PC-3 (cell line): ENCODE measurements at regions of chr22 and their contacts with region 1.

Region 1: GRCh38 chr22:29040385-29041275 is 21.0 kb downstream of the C22orf31 start:
- DNase-seq: peak; percentile 64
- ATAC-seq: peak; percentile 60
- H3K4me3 ChIP-seq: no peak overlapping the region
- H3K27ac ChIP-seq: no peak overlapping the region
- H3K4me1 ChIP-seq: peaks cover 16% of the 10 kb centered on the region
- H3K27me3 ChIP-seq: no peaks in the 10 kb centered on the region
- CTCF ChIP-seq: peak; percentile 88

Region 2: GRCh38 chr22:28791841-28792490 is 248.7 kb before region 1 on chr22:
- CTCF ChIA-PET with region 1: no interaction called
- POLR2A ChIA-PET with region 1: no interaction called
- intact Hi-C with region 1: loop called (anchors 5 kb)
- DNase-seq: no peak
- ATAC-seq: peak; percentile 15; the same call in 1 of the 2 replicates
- H3K4me3 ChIP-seq: no peak overlapping the region
- H3K27ac ChIP-seq: no peak overlapping the region
- H3K4me1 ChIP-seq: no peaks in the 10 kb centered on the region
- H3K27me3 ChIP-seq: no peaks in the 10 kb centered on the region
- CTCF ChIP-seq: no peak

Region 3: DNA sequence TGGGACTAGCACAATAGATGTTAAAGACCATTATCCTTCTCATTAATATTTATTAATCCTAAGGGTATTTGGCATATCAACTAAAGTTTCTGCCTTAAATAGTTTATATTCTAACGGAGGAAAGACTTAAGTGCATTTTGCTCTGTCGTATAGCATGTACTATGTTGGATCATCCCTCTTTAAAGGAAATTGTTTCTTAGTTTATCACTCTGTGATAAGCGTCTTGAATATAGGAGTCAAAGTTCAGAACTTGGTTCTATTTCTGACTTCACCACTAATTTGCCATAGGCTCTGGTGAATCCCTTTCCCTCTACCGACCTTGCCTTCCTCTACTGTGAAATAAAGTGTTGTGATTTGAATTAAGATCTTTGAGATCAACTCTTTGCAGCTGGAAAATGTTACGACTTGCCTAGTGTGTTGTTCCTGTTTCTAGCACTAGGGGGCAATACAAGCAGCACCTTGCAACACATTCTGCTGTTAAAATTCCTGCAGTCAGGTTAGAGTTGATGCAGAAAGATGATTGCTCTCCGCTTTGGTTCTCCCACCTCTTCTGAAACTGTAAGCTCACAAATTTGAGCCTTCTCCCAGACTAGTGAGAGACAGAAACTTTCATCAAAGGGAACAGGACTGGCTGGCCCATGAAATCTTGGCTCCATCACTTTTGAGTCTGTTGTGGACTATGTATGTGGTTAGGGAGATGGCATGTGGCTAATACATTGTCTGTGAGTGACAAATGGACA is 185.1 kb before region 1 on chr22:
- CTCF ChIA-PET with region 1: interaction called, 6 read pairs
- POLR2A ChIA-PET with region 1: no interaction called
- intact Hi-C with region 1: loop called (anchors 1 kb)
- DNase-seq: peak; percentile 72
- ATAC-seq: peak; percentile 57
- H3K4me3 ChIP-seq: no peak overlapping the region
- H3K27ac ChIP-seq: no peak overlapping the region
- H3K4me1 ChIP-seq: no peaks in the 10 kb centered on the region
- H3K27me3 ChIP-seq: no peaks in the 10 kb centered on the region
- CTCF ChIP-seq: peak; percentile 84

Region 4: GRCh38 chr22:28882878-28883656 is 157.6 kb before region 1 on chr22 and contains the start of gene ZNRF3:
- CTCF ChIA-PET with region 1: interaction called, 7 read pairs
- POLR2A ChIA-PET with region 1: interaction called, 27 read pairs
- intact Hi-C with region 1: loop called (anchors 2 kb)
- DNase-seq: peak; percentile 83
- ATAC-seq: peak; percentile 67
- H3K4me3 ChIP-seq: peak within 1 kb of the TSS; percentile 93
- H3K27ac ChIP-seq: peak within 1 kb of the TSS; percentile 31
- H3K4me1 ChIP-seq: peaks cover 28% of the 10 kb centered on the region
- H3K27me3 ChIP-seq: no peaks in the 10 kb centered on the region
- CTCF ChIP-seq: no peak
- total RNA-seq, gene ZNRF3: 8.1 and 9.4 TPM in 2 replicates

Region 5: DNA sequence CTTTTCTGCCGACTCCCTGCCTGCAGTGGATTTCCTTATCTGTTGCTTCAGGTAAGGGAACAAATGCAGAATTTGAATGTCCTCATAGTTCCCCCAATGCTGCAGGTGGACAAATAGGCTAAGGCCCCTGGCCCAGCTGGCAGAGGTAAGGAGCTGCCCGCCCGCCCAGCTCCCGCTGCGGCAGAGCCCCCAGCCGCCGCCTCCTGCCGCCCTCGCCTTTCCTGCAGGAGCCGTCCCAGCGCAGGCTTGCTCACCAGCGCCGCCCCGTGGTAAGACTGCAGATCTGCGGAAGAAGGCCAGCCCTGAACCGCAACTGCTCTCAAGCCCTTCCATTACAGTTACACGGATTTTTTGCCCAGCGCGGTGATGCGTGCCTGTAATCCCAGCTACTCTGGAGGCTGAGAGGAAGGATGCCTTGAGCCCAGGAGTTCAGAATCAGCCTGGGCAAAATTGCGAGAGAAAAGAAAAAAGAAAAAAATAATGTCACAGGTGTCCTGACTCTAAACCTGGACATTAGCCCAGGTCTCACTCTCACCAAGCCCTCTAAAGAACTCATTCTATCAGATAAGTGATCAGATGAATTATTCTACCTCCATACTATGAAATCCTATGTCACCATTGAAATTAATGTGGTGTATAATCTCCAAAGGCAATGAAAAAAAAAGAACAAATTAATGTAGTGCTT is 113.9 kb after region 1 on chr22:
- CTCF ChIA-PET with region 1: interaction called, 3 read pairs
- POLR2A ChIA-PET with region 1: no interaction called
- intact Hi-C with region 1: loop called (anchors 10 kb)
- DNase-seq: peak; percentile 64
- ATAC-seq: peak; percentile 90
- H3K4me3 ChIP-seq: peak overlapping the region; percentile 26; the same call in 1 of the 2 replicates
- H3K27ac ChIP-seq: no peak overlapping the region
- H3K4me1 ChIP-seq: peaks cover 4% of the 10 kb centered on the region; the same call in 1 of the 2 replicates
- H3K27me3 ChIP-seq: no peaks in the 10 kb centered on the region
- CTCF ChIP-seq: peak; percentile 80